Colonic mucosa (tissue), 4 donors: ENCODE measurements at regions of chr20 and their contacts with region 1.

Region 1: GRCh38 chr20:9412309-9412708 is 102.1 kb upstream of the LAMP5 start:
- DNase-seq: no peak
- H3K4me3 ChIP-seq: no peak overlapping the region
- H3K27ac ChIP-seq: no peak overlapping the region
- H3K4me1 ChIP-seq: no peaks in the 10 kb centered on the region
- H3K27me3 ChIP-seq: no peaks in the 10 kb centered on the region
- CTCF ChIP-seq: no peak

Region 2: DNA sequence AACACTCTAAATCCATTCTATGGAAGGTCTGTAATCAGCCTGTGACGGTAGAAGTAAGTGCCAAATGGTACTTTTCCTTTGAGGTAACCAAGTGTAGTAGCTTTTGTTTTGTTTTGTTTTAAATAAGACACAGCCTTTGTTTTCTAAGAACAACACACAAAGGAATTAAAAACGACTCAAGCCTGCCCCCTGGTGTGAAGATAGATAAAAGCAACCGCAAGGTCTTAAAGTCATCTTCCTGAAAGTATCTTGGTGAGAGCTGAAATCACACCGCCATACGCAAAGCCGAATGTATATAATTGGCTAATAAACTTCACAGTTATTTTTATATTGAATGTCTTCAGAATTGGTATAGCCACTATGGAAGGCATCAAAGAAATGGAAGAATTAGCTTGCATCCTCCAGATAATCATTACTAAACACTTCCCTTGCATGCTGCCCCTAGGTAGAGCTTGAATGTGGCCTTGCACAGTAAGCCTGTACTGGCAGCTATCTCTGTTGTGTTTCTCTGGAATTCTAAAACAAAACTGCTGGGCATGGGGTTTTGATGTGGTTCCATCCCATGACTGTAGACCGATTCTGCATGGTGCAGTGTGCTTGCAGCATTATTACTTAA is 197.7 kb after region 1 on chr20:
- intact Hi-C with region 1: loop called (anchors 5 kb)
- DNase-seq: peak; percentile 73
- H3K4me3 ChIP-seq: no peak overlapping the region
- H3K27ac ChIP-seq: no peak overlapping the region
- H3K4me1 ChIP-seq: no peaks in the 10 kb centered on the region
- H3K27me3 ChIP-seq: no peaks in the 10 kb centered on the region
- CTCF ChIP-seq: peak; percentile 59